Transverse colon (tissue), 4 donors: ENCODE measurements at regions of chr20 and their contacts with region 1.

Region 1: DNA sequence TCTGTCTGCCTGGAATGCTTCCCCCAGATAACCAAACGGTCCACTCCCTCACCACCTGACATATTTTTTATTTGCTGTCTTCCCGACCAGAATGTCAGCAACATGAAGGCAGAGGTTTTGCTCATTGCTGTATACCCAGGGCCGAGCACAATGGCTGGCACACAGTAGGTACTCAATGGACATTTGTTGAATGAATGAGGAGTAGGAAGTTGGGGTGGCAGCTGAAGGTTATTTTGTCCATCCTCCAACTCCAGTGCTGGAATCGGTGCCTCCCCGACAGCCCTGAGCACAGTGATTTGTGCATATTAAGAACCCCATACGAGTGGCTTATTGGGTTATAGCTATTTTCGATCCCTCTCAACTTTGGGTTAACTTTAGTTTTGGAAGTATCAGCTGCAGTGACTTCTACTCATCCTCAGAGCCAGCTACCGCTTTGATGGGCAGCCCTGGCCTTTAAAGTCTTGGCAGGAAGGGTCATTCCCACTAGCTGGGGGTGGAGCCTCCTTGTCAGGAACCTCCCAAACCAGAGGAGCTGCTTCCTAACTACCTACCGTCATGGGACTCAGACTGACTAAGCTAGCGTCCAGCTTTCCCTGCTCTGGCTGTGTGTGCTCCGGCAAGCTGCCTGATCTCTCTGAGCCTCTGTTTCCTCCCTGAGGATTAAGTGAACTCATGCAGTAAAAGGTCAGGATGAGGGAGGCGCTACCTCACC is 10.2 kb downstream of the DUSP15 start:
- DNase-seq: peak; percentile 20
- H3K4me3 ChIP-seq: peak overlapping the region in 1 of 4 donors; percentile 62
- H3K27ac ChIP-seq: no peak overlapping the region
- H3K4me1 ChIP-seq: peaks cover 10 to 19% (median 14%) of the 10 kb centered on the region in 4 donors
- H3K27me3 ChIP-seq: peaks cover 40% of the 10 kb centered on the region
- CTCF ChIP-seq: no peak
- EP300 ChIP-seq: no peak
- POLR2A ChIP-seq: no peak

Region 2: DNA sequence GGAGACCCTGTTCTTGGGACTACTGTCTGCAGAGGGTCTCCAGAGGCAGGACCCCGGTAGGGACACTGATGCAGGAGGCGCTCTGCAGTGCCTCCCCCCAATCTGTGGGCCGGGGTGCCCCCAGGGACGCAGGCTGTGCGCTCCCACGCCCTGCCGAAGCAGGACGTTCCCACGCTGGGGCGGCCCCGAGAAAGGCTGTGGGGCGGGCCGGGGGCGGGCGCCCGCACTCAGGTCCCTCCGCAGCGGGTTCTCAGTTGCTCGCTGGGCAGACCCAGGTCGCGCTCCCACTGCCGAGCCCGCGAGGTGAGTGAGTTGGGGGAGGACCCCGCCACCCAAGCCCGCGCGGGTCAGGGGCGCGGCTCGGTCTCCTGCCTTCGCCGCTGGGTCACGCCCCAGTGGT is 222.5 kb before region 1 on chr20 and contains the start of gene COX4I2:
- in situ Hi-C with region 1: no loop called
- intact Hi-C with region 1: no loop called
- DNase-seq: no peak
- H3K4me3 ChIP-seq: no peak within 1 kb of the TSS
- H3K27ac ChIP-seq: no peak within 1 kb of the TSS
- H3K4me1 ChIP-seq: no peaks in the 10 kb centered on the region
- H3K27me3 ChIP-seq: peaks cover 15% of the 10 kb centered on the region
- CTCF ChIP-seq: no peak
- EP300 ChIP-seq: no peak
- POLR2A ChIP-seq: no peak
- total RNA-seq, gene COX4I2: not detected

Region 3: GRCh38 chr20:31951530-31952453 is 91.6 kb after region 1 on chr20 and contains the start of gene PDRG1:
- in situ Hi-C with region 1: no loop called
- intact Hi-C with region 1: loop called (anchors 2 kb)
- DNase-seq: peak; percentile 97
- H3K4me3 ChIP-seq: peak within 1 kb of the TSS; percentile 75 to 95 (median 82)
- H3K27ac ChIP-seq: peak within 1 kb of the TSS; percentile 73 to 88 (median 80)
- H3K4me1 ChIP-seq: peaks cover 9 to 13% (median 10%) of the 10 kb centered on the region in 4 donors
- H3K27me3 ChIP-seq: no peaks in the 10 kb centered on the region
- CTCF ChIP-seq: peak; percentile 85 to 93 (median 90)
- EP300 ChIP-seq: no peak
- POLR2A ChIP-seq: peak; percentile 70
- total RNA-seq, gene PDRG1: 2.2 to 9.2 (median 6.5) TPM

Region 4: DNA sequence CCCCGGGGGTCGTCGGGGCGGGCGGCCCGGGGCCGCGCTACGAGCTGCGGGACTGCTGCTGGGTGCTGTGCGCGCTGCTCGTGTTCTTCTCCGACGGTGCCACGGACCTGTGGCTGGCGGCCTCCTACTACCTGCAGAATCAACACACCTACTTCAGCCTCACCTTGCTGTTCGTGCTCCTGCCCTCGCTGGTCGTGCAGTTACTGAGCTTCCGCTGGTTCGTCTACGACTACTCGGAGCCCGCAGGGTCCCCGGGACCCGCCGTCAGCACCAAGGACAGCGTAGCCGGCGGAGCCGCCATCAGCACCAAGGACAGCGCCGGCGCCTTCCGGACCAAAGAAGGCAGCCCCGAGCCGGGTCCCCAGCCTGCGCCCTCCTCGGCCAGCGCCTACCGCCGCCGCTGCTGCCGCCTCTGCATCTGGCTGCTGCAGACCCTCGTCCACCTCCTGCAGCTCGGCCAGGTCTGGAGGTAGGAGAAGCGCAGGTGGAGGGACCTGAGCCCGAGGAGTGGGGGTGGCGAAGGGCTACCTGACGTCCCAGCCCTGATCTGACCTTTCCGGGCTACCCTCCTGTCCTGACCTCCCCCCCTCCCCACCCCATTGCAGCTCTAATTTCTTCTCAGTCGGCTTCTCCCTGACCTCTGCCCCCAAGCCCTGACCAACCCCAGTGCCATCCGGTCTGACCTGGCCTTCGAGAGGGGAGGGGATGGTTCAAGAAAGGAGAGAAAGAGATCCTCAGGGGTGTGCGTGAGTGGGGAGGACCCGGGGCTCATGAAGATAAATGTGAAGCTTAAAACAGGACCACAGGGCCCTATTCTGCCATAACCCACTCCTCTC is 108.4 kb after region 1 on chr20:
- in situ Hi-C with region 1: loop called in 1 of 4 experiments (anchors 10 kb)
- intact Hi-C with region 1: no loop called
- DNase-seq: peak; percentile 56
- H3K4me3 ChIP-seq: no peak overlapping the region
- H3K27ac ChIP-seq: no peak overlapping the region
- H3K4me1 ChIP-seq: peaks cover 0 to 4% (median 0%) of the 10 kb centered on the region in 4 donors
- H3K27me3 ChIP-seq: peaks cover 59% of the 10 kb centered on the region
- CTCF ChIP-seq: no peak
- EP300 ChIP-seq: no peak
- POLR2A ChIP-seq: no peak